ENCODE measurements at regions of chr1 and their contacts with region 1.

Region 1: DNA sequence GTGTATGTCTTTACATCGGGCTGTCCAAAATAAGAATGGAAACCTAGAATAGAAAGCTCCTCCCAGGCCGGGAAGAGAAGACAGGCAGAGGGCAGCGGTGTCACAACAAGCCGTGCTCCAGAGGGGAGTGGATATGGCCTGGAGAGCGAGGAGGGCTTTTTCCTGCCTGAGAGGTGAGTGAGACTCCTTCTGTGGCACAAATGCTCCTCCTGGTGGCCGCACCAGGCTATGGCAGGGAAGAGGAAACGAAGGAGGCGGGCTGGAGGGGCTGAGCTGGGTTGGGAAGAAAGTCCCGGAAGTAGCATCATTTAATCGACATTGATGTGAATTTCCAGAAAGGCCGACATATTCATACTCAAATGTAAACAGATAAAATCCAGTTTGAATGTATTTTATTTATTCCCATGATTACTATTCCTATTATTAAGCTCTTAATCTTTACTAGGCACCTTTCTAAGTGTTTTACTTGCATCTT is 54.7 kb downstream of the MEF2D start:
- DNase-seq: peak; percentile 82 to 88 (median 85)
- ATAC-seq: peak; percentile 96
- H3K4me3 ChIP-seq: no peak overlapping the region
- H3K27ac ChIP-seq: no peak overlapping the region
- H3K4me1 ChIP-seq: peaks cover 4% of the 10 kb centered on the region
- H3K27me3 ChIP-seq: peaks cover 0 to 6% of the 10 kb centered on the region in 2 donors
- CTCF ChIP-seq: peak; percentile 87 to 98 (median 96)
- POLR2A ChIP-seq: no peak

Region 2: GRCh38 chr1:156384007-156384406 is 61.8 kb before region 1 on chr1:
- intact Hi-C with region 1: loop called (anchors 1 kb)
- DNase-seq: no peak
- ATAC-seq: no peak
- H3K4me3 ChIP-seq: no peak overlapping the region
- H3K27ac ChIP-seq: no peak overlapping the region
- H3K4me1 ChIP-seq: peaks cover 5% of the 10 kb centered on the region
- H3K27me3 ChIP-seq: peaks cover 0 to 10% of the 10 kb centered on the region in 2 donors
- CTCF ChIP-seq: no peak
- POLR2A ChIP-seq: no peak

Region 3: DNA sequence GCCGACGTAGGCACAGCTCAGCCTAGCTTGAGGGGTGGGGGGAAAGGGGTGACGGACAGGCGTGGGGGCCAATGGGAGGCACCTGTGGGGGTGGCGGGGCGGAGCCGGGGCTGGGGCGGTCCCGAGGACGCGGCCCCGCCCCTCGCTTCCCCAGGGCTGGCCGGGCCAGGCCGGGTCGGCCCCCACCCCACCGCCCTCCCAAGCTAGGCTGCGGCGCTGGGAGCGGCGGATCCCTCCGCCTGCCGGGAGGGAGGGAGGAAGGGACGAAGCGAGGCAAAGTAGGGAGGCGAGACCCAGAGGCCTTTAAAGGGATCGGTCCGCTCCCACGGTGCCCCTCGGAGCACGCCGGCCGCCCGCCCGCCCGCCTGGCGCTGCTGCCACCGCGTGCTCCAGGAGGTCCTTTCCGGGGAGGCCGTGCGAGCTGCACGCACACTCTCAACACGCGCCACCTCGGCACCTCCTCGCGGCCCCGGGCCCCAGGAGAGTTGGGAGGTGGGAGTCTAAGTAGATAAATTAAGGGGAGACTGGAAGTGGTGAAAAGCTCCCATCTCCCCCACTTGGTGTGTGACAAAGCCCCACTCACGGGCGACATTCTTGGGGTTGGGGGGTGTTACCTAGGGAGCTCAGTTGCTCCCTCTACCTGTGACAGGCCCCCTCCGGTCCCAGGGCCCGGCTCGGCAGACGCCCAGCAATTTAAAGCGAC is 55.1 kb after region 1 on chr1:
- intact Hi-C with region 1: no loop called
- DNase-seq: peak; percentile 94 to 96 (median 94)
- ATAC-seq: peak; percentile 81
- H3K4me3 ChIP-seq: peak overlapping the region in 1 of 2 donors; percentile 91
- H3K27ac ChIP-seq: peak overlapping the region; percentile 99 to 100 (median 100)
- H3K4me1 ChIP-seq: peaks cover 76% of the 10 kb centered on the region
- H3K27me3 ChIP-seq: no peaks in the 10 kb centered on the region
- CTCF ChIP-seq: peak; percentile 33 to 68 (median 67)
- POLR2A ChIP-seq: peak; percentile 94 to 97 (median 96)

Measured in body of pancreas (tissue), 4 donors.